ENCODE measurements at regions of chr5 and their contacts with region 1.

Region 1: DNA sequence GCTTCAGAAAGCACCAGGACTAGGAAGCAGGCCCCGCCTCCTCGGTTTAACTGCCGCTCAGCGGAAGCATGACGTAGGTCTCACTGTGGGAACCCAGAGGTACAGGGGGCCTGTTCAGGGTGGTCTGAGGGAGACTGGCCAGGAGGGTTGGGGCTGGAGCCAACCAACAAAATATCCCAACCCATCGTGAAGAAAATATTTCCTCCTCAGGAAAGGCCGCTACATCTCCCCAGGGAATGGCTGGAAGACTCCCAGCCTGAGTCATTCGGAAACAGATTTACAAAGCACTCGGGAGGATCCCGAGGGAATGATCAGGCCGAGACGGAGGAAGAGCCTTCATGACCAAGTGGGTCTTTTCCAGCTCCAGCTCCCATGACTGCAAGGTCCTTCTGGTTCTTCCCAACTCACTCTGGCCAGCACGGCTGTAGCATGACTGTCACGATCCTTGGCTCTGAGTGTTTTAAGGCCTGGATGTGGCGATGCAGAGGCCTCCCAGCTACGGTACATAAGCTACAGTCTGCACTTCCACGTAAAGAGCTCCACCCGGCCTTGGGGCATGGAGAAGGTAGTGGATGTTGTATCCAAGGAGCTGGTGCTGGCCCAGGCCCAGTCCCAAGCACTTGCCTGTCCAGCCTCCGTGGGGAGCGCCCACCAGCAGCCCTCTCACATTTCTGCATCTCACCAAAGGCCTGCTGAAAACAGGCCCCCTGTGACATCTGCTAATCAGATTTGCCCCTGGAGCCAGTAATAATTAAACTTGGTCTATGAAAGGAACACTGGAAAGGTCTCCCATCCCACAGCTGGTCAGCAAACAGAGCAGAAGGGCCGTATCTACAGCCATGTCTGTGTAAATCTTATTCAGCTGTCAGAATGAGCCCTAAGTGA is 100.6 kb downstream of the LHFPL2 start:
- DNase-seq: no peak
- H3K4me3 ChIP-seq: no peak overlapping the region
- H3K27ac ChIP-seq: peak overlapping the region; percentile 57 to 63
- H3K4me1 ChIP-seq: no peaks in the 10 kb centered on the region
- H3K27me3 ChIP-seq: no peaks in the 10 kb centered on the region
- CTCF ChIP-seq: no peak
- POLR2A ChIP-seq: no peak

Region 2: GRCh38 chr5:78253201-78253600 is 294.8 kb before region 1 on chr5:
- intact Hi-C with region 1: no loop called
- DNase-seq: no peak
- H3K4me3 ChIP-seq: no peak overlapping the region
- H3K27ac ChIP-seq: no peak overlapping the region
- H3K4me1 ChIP-seq: no peaks in the 10 kb centered on the region
- H3K27me3 ChIP-seq: no peaks in the 10 kb centered on the region
- CTCF ChIP-seq: no peak
- POLR2A ChIP-seq: no peak

Region 3: DNA sequence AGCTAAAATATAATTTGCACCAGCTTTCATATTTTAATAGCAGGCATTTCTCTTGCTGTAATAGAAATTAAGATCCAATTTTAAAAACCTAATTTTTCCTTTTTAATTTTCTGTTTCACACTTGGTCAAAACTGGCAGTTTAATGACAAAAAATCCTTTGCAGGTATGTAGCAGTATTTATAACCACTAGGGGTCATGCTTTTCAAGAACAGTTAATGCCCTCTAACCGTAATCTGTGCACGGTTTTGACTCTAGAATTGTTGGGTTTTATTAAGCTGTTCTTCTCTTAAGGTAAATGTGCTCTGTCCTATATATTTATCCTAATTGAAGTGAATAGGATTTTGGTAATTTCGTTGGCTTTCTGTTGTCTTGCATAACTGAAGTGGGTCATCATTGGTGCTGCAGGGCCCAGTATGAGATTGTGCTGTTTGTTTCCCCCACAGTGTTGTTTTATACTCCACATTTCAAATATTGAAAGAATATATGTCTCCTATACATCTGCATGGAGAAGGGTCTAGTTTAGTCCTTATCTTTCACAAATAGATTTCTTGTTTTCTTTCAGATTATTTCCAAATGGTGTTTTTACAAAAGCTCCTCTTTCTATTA is 80.1 kb before region 1 on chr5:
- intact Hi-C with region 1: loop called (anchors 5 kb)
- DNase-seq: no peak
- H3K4me3 ChIP-seq: no peak overlapping the region
- H3K27ac ChIP-seq: no peak overlapping the region
- H3K4me1 ChIP-seq: no peaks in the 10 kb centered on the region
- H3K27me3 ChIP-seq: no peaks in the 10 kb centered on the region
- CTCF ChIP-seq: peak in 3 of 4 experiments; percentile 69 to 84 (median 70)
- POLR2A ChIP-seq: no peak

Region 4: DNA sequence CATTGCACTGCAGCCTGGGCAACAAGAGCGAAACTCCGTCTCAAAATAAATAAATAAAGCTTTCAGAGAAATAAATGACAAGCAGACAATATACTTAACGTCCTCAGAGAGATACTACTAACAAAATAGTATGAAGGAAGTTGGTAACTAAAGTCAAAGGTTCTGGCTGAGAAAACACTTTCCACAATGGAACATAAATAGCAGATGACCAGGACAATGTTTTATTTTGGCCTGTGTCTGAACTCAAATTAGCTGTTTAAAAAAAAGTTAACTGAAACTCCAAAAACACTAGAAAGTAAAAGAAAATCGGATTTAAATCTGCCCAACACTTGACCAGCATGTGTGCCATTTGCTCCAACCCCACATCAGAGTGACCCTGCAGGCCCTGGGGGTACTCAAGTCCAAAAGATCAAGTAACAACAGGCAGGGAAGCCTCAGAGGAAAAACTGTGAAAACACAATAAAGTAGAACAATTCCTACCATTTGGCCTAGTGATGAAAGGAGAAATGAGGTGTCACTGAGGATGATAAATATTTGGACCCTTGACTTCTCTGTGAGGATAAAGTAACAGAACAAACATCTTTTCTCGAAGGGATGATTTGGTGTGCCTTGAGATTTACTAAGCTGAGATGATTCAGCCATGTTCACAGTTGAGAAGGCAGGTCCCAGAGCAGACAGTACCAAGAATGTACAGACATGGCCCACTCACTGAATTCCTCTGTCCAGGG is 52.9 kb after region 1 on chr5:
- intact Hi-C with region 1: no loop called
- DNase-seq: no peak
- H3K4me3 ChIP-seq: no peak overlapping the region
- H3K27ac ChIP-seq: peak overlapping the region in 1 of 2 donors; percentile 24
- H3K4me1 ChIP-seq: no peaks in the 10 kb centered on the region
- H3K27me3 ChIP-seq: no peaks in the 10 kb centered on the region
- CTCF ChIP-seq: no peak
- POLR2A ChIP-seq: no peak

Region 5: GRCh38 chr5:78908173-78909061 is 360.4 kb after region 1 on chr5:
- intact Hi-C with region 1: loop called (anchors 10 kb)
- DNase-seq: no peak
- H3K4me3 ChIP-seq: no peak overlapping the region
- H3K27ac ChIP-seq: peak overlapping the region in 1 of 2 donors; percentile 1
- H3K4me1 ChIP-seq: no peaks in the 10 kb centered on the region
- H3K27me3 ChIP-seq: no peaks in the 10 kb centered on the region
- CTCF ChIP-seq: no peak
- POLR2A ChIP-seq: no peak